Sciatic nerve (tissue), 2 donors: ENCODE measurements at regions of chr1 and their contacts with region 1.

Region 1: DNA sequence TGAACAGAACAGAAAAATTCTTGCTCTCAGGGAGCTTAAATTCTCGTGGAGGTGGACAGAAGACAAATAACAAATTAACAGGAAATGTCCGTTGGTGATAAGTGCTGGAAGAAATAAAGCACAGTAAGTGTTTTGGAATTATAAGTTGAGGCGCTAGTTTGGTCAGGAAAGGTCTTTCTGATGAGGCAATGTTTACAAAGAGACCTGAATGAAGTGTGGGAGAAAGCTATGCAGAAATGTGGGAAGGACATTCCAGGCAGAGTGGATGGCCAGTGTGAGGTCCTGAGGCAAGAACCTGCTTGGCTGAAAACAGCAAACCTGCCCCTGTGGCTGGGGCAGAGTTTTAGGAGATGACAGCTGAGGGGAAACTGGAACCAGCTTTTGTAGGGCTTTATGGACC is 23.3 kb downstream of the NGF start:
- DNase-seq: no peak
- ATAC-seq: peak; percentile 53

Region 2: DNA sequence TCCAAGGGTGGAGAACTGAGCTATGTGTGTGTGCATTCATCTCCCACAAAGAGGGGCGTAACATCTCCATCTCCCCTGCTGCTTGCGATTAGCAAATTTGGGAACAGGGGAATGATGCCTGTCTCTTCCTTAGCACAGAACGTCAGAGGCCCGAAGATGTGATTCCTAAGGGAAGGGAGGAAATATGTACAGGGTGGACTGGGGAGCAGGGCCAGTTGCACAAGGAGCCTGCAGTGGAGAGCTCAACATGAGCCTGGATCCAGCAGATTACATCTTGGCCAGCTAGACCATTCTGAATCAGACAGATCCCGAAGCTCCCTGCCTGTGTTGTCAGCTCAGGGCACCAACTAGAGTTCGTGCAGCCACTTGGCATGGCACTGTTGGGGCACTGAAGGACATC is 94.8 kb before region 1 on chr1:
- intact Hi-C with region 1: no loop called
- DNase-seq: no peak
- ATAC-seq: peak; percentile 57

Region 3: DNA sequence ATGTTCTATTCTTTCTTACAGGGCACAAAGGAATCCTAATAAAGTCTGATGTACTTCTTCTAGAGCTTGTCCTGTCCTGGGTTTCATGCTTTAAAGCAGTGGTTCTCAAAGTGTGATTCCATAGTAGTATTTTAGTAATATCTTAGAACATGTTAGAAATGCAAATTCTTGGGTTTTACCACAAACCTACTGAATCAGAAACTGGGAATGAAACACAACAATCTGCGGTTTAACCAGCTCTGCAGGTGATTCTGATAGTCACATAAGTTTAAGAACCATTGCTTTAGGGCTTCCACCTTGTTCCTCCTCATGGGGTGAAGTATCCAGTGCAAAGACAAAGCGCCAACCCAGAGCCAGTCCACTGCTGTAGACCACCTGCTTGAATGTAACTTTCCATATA is 17.8 kb before region 1 on chr1:
- intact Hi-C with region 1: no loop called
- DNase-seq: no peak
- ATAC-seq: no peak

Region 4: DNA sequence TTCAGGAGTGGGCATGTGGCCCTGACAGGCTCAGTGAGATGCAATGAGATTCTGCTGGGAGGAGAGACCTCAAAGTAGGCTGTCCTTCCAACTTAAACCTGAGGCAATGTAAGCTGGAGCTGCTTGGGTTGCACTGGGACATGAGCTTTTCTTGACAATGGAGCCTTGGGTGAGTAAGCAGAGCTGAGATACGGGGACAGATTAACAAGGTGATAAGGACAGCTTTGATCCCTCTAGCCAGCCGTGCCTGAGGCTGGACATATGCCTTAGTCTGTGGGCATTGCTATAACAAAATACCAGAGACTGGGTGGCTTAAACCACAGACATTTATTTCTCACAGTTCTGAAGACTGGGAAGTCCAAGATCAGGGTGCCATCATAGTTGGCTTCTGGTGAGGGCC is 41.6 kb after region 1 on chr1:
- intact Hi-C with region 1: no loop called
- DNase-seq: no peak
- ATAC-seq: no peak

Region 5: DNA sequence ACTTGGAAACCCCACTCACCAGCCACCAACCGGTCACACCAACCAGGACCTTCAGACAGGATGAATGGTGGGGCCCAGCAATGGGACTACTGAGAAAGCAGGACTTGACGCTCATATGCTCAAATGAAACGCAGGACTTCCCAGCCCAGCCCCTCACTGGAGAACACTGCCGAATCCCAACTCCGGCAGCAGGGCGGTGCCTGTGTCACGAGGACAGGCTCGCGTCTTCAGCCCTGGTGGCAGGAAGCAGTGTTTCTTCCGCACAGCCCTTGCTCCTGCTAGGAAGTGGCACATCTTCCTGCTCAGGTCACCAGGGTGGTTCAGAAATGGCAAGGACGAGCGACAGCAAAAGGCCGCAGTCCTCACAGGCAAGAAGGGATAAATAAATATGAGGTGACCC is 1217.2 kb after region 1 on chr1:
- intact Hi-C with region 1: loop called (anchors 5 kb)
- DNase-seq: no peak
- ATAC-seq: no peak